Common myeloid progenitor, CD34-positive (primary cell): ENCODE measurements at regions of chr2 and their contacts with region 1.

Region 1: GRCh38 chr2:180125245-180125962 is 118.3 kb upstream of the CWC22 start:
- DNase-seq: peak; percentile 86 to 94 (median 92)
- H3K4me3 ChIP-seq: peak overlapping the region in 1 of 7 experiments; percentile 34
- H3K27ac ChIP-seq: no peak overlapping the region
- H3K4me1 ChIP-seq: peaks cover 0 to 5% (median 0%) of the 10 kb centered on the region in 4 experiments
- H3K27me3 ChIP-seq: no peaks in the 10 kb centered on the region

Region 2: DNA sequence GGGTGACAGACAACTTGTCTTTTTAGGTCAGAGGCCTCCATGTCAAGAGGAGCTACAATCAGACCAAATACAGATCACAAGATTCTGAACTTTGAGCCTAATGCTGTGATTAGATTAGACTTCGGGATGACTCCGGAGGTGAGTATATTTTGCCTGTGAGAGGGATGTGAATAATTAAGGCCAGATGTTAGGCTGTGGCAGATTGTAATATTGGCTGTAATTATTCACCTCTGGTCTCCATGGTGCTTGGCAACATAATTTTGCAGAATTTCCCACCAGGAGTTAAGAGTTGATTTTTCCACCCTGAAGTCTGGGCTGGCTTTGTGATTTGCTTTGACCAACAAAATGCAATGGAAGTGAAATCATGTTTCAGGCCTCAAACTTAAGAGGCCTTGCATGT is 10.1 kb before region 1 on chr2:
- CTCF ChIA-PET with region 1: interaction called, 13 read pairs
- POLR2A ChIA-PET with region 1: no interaction called
- DNase-seq: no peak
- H3K4me3 ChIP-seq: no peak overlapping the region
- H3K27ac ChIP-seq: no peak overlapping the region
- H3K4me1 ChIP-seq: no peaks in the 10 kb centered on the region
- H3K27me3 ChIP-seq: no peaks in the 10 kb centered on the region